ENCODE measurements at regions of chr6 and their contacts with region 1.

Region 1: GRCh38 chr6:156686995-156687788 is 90.0 kb upstream of the ARID1B start:
- DNase-seq: peak; percentile 89 to 95 (median 92)
- H3K4me3 ChIP-seq: peak overlapping the region; percentile 56 to 86 (median 79)
- H3K27ac ChIP-seq: peak overlapping the region; percentile 97 to 100 (median 98)
- H3K4me1 ChIP-seq: peaks cover 6 to 15% of the 10 kb centered on the region in 2 donors
- H3K27me3 ChIP-seq: no peaks in the 10 kb centered on the region
- CTCF ChIP-seq: peak in 2 of 6 experiments; percentile 5 to 28
- POLR2A ChIP-seq: peak; percentile 75 to 94

Region 2: DNA sequence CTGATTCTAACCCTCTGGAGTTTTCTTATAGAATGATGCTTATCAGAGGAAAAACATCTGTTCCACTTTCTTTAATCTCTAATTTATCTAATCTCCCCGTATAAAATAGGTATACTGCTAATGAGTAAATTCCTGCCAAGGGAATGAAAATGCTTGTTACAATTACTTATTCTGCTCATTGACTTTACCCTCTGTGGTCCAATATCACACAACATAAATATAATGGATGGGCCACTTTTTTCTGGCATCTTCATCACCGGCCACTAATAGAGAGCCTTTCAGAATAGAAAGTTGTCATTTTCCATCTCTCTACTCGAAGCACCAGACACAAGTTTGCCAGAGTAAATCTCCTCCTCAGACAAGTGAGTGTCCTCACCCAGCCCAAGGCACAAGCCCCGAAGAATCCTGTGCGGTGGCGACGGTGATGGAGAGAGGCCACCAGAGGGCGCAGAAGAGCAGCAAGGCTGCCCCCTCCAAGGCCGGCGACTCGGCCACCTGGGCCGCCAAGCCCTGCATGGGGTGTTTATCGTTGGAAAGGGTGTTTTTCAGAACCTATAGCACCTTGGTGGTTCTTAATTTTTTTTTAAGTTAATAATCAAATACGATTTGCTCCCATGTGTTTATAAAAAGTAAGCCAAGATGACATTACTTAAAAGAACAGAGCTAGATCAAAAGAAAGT is 122.9 kb before region 1 on chr6:
- intact Hi-C with region 1: loop called in 1 of 2 experiments (anchors 10 kb)
- DNase-seq: peak; percentile 56 to 92 (median 82)
- H3K4me3 ChIP-seq: no peak overlapping the region
- H3K27ac ChIP-seq: no peak overlapping the region
- H3K4me1 ChIP-seq: no peaks in the 10 kb centered on the region
- H3K27me3 ChIP-seq: no peaks in the 10 kb centered on the region
- CTCF ChIP-seq: peak; percentile 87 to 96 (median 90)
- POLR2A ChIP-seq: no peak

Region 3: DNA sequence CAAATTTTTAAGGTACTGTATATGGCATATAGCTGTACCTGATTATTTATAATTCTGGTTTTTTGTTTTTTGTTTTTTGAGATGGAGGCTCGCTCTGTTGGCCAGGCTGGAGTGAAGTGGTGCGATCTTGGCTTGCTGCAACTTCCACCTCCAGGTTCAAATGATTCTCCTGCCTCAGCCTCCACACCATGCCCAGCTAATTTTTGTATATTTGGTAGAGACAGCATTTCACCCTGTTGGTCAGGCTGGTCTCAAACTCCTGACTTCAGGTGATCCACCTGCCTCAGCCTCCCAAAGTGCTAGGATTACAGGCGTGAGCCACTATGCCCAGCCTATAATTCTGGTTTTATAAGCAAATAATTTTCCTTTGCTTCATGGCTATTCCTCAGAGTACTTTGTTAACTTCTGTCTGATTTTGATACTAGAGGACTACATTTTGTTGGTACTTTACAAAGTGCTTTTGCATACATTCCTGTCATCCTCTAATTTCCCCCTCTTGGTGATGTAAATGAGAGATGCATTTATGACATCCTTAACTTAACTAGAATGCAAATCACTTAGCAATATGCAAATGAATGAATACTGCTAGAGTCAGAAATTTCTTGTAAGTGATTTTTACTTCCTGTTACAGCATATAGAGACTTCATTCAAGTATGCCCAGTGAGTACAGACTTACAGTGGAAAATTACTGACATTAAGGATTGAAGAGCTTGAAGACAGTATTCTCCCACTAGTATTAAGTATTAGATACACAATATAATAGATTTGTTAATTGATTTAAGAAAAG is 54.3 kb after region 1 on chr6:
- intact Hi-C with region 1: no loop called
- DNase-seq: no peak
- H3K4me3 ChIP-seq: no peak overlapping the region
- H3K27ac ChIP-seq: no peak overlapping the region
- H3K4me1 ChIP-seq: no peaks in the 10 kb centered on the region
- H3K27me3 ChIP-seq: no peaks in the 10 kb centered on the region
- CTCF ChIP-seq: no peak
- POLR2A ChIP-seq: no peak

Region 4: GRCh38 chr6:156776840-156777576 is 89.8 kb after region 1 on chr6 and contains the start of gene ARID1B:
- intact Hi-C with region 1: loop called (anchors 5 kb)
- DNase-seq: peak; percentile 74 to 91 (median 87)
- H3K4me3 ChIP-seq: peak within 1 kb of the TSS; percentile 46 to 98 (median 81)
- H3K27ac ChIP-seq: peak within 1 kb of the TSS; percentile 93 to 98 (median 96)
- H3K4me1 ChIP-seq: peaks cover 21 to 29% of the 10 kb centered on the region in 2 donors
- H3K27me3 ChIP-seq: no peaks in the 10 kb centered on the region
- CTCF ChIP-seq: peak in 1 of 6 experiments; percentile 12
- POLR2A ChIP-seq: peak; percentile 79 to 83
- total RNA-seq, gene ARID1B: 36.8 to 85.6 (median 64.0) TPM

Region 5: DNA sequence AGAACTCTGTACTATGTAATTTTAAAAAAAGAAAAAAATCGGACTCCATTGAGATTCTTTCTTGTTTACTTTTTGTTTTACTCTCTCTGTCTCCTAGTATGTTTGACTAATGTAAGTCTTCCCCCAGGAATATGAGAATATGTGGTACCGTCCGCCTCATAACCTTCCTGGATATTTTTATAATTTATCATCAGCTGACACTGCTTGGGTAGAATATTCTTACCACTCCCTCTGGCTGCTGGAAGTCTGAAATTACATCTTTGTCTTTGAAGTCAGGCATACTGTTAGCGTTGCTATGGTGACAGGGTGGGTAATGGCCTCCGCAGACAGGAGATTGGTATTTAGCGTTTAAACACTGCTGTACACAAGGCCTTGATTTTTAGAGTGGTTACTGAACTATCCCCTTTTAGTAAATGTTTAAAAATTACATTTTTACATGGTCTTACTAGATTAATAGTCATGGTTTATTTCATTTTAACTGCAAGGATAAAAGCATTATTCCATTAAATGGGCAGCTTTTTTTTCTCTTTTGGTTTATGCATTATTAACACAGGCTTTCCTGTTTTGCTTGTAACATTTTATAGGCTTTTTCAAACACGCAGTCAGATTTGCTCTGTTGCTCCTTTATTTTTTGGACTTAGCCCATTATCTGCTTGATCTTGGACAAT is 266.4 kb after region 1 on chr6:
- intact Hi-C with region 1: loop called in 1 of 2 experiments (anchors 5 kb)
- DNase-seq: peak; percentile 50 to 77 (median 70)
- H3K4me3 ChIP-seq: no peak overlapping the region
- H3K27ac ChIP-seq: peak overlapping the region in 2 of 5 donors; percentile 19 to 58
- H3K4me1 ChIP-seq: peaks cover 19 to 41% of the 10 kb centered on the region in 2 donors
- H3K27me3 ChIP-seq: no peaks in the 10 kb centered on the region
- CTCF ChIP-seq: peak; percentile 20 to 66 (median 54)
- POLR2A ChIP-seq: no peak

Measured in adrenal gland (tissue), 19 donors.